Dorsolateral prefrontal cortex (tissue), 120 donors: ENCODE measurements at regions of chr16 and their contacts with region 1.

Region 1: GRCh38 chr16:28879841-28880588 is 1.7 kb downstream of the ATP2A1 start:
- DNase-seq: peak; percentile 83 to 90 (median 88)
- H3K4me3 ChIP-seq: peak overlapping the region; percentile 38 to 93 (median 80)
- H3K27ac ChIP-seq: peak overlapping the region in 10 of 59 donors; percentile 9 to 71 (median 32)
- H3K27me3 ChIP-seq: peaks cover 0 to 7% (median 0%) of the 10 kb centered on the region in 45 donors
- CTCF ChIP-seq: peak in 41 of 56 donors; percentile 9 to 57 (median 37)

Region 2: GRCh38 chr16:28835867-28836744 is 43.9 kb before region 1 on chr16:
- intact Hi-C with region 1: no loop called
- DNase-seq: no peak
- H3K4me3 ChIP-seq: no peak overlapping the region
- H3K27ac ChIP-seq: no peak overlapping the region
- H3K27me3 ChIP-seq: no peaks in the 10 kb centered on the region
- CTCF ChIP-seq: no peak

Region 3: GRCh38 chr16:28863929-28864793 is 15.9 kb before region 1 on chr16:
- intact Hi-C with region 1: no loop called
- DNase-seq: peak in 1 of 10 donors; percentile 23
- H3K4me3 ChIP-seq: peak overlapping the region; percentile 66 to 98 (median 92)
- H3K27ac ChIP-seq: peak overlapping the region in 57 of 59 donors; percentile 72 to 99 (median 96)
- H3K27me3 ChIP-seq: no peaks in the 10 kb centered on the region
- CTCF ChIP-seq: no peak

Region 4: GRCh38 chr16:28924732-28925385 is 44.8 kb after region 1 on chr16 and contains the start of gene RABEP2:
- intact Hi-C with region 1: loop called in 1 of 2 experiments (anchors 5 kb)
- DNase-seq: peak; percentile 81 to 93 (median 88)
- H3K4me3 ChIP-seq: peak within 1 kb of the TSS; percentile 58 to 99 (median 89)
- H3K27ac ChIP-seq: peak within 1 kb of the TSS; percentile 74 to 98 (median 95)
- H3K27me3 ChIP-seq: no peaks in the 10 kb centered on the region
- CTCF ChIP-seq: peak in 5 of 56 donors; percentile 4 to 52 (median 22)
- total RNA-seq, gene RABEP2: 9.1 to 24.2 (median 15.8) TPM